ENCODE measurements at regions of chr1 and their contacts with region 1.

Region 1: GRCh38 chr1:183432548-183432875 is 14.3 kb upstream of the NMNAT2 start:
- DNase-seq: no peak
- H3K4me3 ChIP-seq: no peak overlapping the region
- H3K27ac ChIP-seq: no peak overlapping the region
- H3K4me1 ChIP-seq: no peaks in the 10 kb centered on the region
- H3K27me3 ChIP-seq: peaks cover 6% of the 10 kb centered on the region
- CTCF ChIP-seq: no peak

Region 2: DNA sequence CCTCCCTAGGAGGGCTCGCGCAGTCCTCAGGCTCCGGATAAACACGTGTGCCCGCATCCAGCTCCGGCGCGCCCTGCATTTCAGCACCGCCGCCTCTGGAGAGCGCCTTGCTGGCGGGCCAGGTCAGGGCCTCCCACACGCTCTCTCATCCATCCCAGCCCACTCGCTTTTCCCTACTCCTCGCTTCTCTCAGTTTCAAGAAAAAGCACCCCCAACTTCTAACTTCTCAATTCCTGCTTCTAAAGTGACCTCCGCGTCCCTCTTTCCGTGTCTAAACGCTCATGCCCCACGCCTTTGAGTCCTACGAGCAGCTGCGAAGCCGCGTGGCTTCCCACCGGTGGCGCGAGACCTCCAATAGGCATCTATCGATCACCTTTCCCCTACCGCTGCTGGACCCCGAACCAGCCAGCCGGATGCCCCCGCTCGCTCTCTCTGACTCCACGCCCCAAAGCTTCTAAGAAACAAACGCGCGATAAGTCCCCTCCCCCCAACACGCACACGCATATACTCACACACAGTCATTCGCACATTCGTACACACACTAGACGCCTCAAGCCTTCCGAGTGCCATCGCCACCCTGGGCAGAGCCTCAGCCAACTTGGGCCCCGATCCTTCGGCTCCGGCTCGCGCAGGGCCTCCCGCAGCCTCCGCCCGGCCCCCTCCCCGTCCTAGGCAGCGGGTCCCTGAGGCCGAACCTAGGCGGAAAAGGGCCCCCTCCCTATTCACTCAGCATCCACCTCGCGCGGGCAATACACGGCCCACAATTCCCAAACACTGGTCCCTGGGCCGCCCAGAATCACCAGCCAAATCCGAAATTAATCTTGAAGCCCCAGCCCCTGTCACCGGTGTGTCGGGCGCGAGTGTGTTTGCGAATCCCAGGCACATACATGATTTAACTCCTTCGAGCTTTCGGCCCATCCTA is 15.4 kb before region 1 on chr1:
- CTCF ChIA-PET with region 1: no interaction called
- POLR2A ChIA-PET with region 1: no interaction called
- intact Hi-C with region 1: loop called (anchors 1 kb)
- DNase-seq: peak; percentile 74
- H3K4me3 ChIP-seq: peak overlapping the region; percentile 32
- H3K27ac ChIP-seq: no peak overlapping the region
- H3K4me1 ChIP-seq: peaks cover 11% of the 10 kb centered on the region
- H3K27me3 ChIP-seq: peaks cover 92% of the 10 kb centered on the region
- CTCF ChIP-seq: no peak

Measured in A673 (cell line).